ENCODE measurements at regions of chr9 and their contacts with region 1.

Region 1: DNA sequence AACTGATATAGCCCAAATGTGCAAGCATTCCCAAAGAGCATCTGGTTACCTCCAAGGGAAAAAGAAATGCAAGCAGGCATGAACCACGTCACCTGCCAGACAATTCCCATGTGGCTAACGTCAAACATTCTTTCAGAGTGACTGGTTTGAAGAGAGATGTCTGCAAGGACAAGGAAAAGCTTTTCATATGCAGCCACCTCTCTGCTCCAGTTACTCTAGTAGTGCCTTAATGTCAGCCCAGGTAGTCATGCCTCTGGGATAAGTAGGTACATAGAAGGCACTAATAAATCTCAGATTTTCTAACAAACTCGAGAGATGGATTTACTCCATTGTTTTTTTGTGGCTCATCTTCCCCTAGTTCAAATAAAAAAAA is 96.8 kb upstream of the IFNK start:
- DNase-seq: no peak
- H3K4me3 ChIP-seq: no peak overlapping the region
- H3K27ac ChIP-seq: peak overlapping the region; percentile 84 to 100 (median 95)
- H3K27me3 ChIP-seq: no peaks in the 10 kb centered on the region
- CTCF ChIP-seq: no peak

Region 2: DNA sequence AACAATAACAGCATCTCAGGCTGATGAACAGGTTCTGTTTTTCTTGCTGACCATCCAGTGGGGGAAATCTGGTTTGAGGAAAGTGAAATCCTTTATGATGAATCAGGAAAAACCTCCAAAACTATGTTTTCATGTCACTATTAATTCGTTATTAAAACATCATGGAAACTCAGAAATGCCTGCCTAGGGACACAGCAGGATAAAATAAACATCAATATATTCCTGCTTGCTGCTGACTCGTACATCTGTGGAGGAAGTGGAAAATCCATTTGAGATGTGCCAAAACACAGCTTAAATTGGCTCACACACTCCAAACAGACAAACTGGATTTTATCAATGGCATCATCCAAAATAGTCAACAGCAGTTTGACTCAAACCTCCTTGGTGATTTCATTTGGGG is 265.2 kb before region 1 on chr9:
- intact Hi-C with region 1: no loop called
- DNase-seq: no peak
- H3K4me3 ChIP-seq: no peak overlapping the region
- H3K27ac ChIP-seq: no peak overlapping the region
- H3K27me3 ChIP-seq: no peaks in the 10 kb centered on the region
- CTCF ChIP-seq: no peak

Region 3: DNA sequence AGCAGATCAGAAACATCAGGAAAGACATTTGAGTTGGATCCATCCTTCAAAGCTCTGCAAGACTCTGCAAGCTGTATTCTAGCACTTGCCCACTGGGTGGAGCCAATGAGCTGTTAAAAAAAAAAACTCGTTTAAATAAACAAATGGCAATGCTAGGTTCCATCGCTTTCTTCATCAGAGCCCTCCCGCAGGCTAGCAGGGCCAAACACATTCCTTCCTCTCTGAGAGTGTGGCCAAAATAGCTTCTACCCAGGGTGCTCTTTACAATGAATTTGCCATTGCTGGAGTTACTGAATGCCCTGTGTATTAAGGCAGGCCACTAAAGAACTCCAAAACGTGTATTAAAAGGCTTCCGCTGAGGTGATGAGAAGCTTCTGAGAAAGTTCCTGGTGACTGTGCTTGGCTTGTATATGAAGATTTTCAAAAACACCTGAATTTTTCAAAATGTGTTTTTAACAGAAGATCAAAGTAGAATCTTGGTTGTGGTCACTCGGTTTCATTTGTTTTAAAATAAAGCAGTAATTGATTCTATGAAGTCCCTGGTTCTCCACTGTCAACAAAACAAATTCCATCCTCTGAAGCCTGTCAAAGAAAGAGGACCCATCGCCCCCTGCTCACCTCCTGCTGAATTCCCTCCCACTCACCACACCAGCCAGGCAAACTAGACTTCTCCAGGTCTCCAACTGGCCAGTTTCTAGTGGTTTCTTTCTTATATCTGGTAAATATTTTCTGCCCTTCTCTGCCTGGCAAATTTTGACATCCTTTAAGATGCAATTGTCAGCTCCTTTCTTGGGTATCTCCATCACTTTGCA is 93.8 kb before region 1 on chr9:
- intact Hi-C with region 1: loop called in 1 of 2 experiments (anchors 5 kb)
- DNase-seq: peak in 6 of 10 donors; percentile 38 to 68 (median 62)
- H3K4me3 ChIP-seq: peak overlapping the region in 8 of 59 donors; percentile 3 to 41 (median 27)
- H3K27ac ChIP-seq: peak overlapping the region in 58 of 59 donors; percentile 22 to 95 (median 64)
- H3K27me3 ChIP-seq: no peaks in the 10 kb centered on the region
- CTCF ChIP-seq: peak; percentile 69 to 99 (median 96)

Region 4: DNA sequence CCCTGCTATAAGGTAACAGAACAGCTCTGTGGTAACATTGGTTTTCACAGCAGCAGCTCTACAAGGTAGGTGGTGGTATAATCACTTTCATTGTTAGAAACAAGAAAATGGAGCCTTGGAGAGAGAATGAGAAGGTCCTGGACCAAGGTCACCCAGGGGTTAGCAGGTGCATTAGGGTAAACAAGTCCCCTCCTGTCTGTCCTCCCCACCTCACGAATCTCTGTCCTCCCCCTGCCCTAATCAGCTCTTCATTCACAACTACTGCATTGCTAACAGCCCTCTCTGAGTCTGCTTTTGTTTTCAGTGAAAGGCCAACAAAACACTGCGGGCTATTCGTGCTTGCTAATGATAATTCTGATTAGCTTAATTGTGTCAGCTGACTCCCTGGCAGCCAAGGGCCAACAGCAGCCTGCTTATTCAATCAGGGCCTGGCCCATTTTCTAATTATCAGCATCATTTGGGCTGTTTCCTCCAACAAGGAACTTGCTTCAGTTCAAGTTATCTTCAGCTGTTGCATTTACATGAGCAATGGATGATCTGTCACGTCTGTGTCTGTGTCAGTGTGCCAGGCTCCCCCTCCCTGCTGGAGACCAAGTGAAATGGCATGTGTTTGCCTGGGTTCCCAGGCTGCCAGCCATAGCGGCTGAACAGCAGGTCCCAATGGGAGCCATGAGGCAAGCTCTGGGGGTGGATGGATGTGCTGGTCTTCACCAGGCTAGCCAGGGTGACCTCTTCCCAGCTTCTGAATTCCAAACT is 73.6 kb before region 1 on chr9:
- intact Hi-C with region 1: loop called in 1 of 2 experiments (anchors 2 kb)
- DNase-seq: peak; percentile 33 to 96 (median 88)
- H3K4me3 ChIP-seq: peak overlapping the region in 8 of 59 donors; percentile 2 to 27 (median 8)
- H3K27ac ChIP-seq: peak overlapping the region; percentile 37 to 98 (median 91)
- H3K27me3 ChIP-seq: no peaks in the 10 kb centered on the region
- CTCF ChIP-seq: peak in 40 of 56 donors; percentile 6 to 55 (median 32)

Region 5: DNA sequence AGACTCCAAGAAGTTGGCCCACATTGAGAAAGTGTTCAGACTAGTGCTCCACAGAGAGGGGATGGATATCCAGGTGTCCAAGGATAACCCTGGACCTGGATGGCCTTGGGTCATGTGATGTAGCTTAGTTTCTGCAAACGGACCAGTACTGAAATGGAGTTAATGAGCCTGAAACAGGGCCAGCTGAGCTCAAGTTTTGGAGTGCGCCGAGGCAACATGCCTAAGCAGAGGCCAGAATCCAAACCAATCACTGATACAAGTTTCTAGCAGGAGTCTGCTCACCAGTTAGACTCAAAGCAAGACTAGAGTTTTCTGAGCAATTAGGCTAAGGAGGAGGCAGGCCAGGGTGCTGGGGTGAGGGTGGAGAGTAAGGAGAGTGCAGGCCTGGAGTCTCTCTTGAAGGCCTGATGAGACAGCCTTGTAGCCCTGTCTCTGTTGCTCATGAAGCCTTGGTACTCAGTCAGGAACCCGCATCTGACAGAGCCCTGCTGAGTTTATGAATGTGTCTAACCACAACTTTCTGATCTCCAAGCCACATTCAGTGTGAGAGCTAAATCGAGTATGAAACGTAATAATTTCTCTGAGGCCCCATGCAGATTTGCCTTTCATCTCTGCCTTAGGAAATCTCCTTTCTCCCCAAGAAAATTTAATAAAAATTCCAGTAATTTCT is 61.4 kb before region 1 on chr9:
- intact Hi-C with region 1: loop called (anchors 5 to 10 kb)
- DNase-seq: no peak
- H3K4me3 ChIP-seq: no peak overlapping the region
- H3K27ac ChIP-seq: peak overlapping the region in 56 of 59 donors; percentile 35 to 94 (median 88)
- H3K27me3 ChIP-seq: no peaks in the 10 kb centered on the region
- CTCF ChIP-seq: no peak

Region 6: DNA sequence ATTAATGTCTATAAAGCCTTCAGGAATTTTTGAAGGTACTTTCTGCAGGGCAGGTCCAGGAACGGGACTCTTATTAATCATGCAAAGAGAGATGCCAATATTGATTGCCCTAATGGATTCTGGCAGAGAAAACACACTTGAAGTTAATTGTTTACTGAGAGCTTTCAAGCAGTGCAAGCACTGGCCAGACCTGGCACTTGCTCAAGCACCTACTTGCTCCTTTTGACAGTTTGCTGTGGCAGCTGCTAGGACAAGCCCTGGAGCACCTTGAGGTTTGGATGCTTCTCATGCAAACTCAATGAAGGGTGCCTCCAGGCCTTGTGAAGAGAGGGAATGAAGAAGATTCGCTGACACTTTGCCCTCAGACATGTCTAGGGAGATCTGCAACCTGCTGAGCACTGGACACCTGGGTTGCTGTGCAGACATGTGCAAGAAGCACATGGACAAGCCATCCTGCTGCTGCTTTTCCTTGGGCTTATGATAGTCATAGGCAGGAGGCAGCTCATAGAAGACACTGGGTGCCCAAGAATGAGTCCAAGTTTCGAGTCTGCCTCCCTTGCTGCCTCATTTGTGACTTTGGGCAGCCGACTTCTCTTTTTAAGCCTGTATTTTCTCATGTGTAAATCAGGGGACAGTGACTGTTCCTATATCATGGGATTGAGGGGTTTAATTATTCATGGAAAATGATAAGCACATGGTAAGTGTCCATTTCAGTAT is 41.5 kb before region 1 on chr9:
- intact Hi-C with region 1: no loop called
- DNase-seq: no peak
- H3K4me3 ChIP-seq: no peak overlapping the region
- H3K27ac ChIP-seq: peak overlapping the region in 44 of 59 donors; percentile 0 to 82 (median 36)
- H3K27me3 ChIP-seq: no peaks in the 10 kb centered on the region
- CTCF ChIP-seq: no peak

Region 7: GRCh38 chr9:27473111-27473529 is 45.9 kb after region 1 on chr9:
- intact Hi-C with region 1: loop called (anchors 5 to 10 kb)
- DNase-seq: peak in 7 of 10 donors; percentile 24 to 56 (median 47)
- H3K4me3 ChIP-seq: peak overlapping the region in 3 of 59 donors; percentile 3 to 11 (median 10)
- H3K27ac ChIP-seq: peak overlapping the region in 49 of 59 donors; percentile 4 to 93 (median 64)
- H3K27me3 ChIP-seq: no peaks in the 10 kb centered on the region
- CTCF ChIP-seq: no peak

Region 8: GRCh38 chr9:27529316-27530278 is 102.3 kb after region 1 on chr9 and contains the start of gene MOB3B:
- intact Hi-C with region 1: loop called (anchors 5 to 10 kb)
- DNase-seq: peak; percentile 80 to 92 (median 88)
- H3K4me3 ChIP-seq: peak within 1 kb of the TSS; percentile 54 to 97 (median 86)
- H3K27ac ChIP-seq: peak within 1 kb of the TSS; percentile 75 to 97 (median 94)
- H3K27me3 ChIP-seq: no peaks in the 10 kb centered on the region
- CTCF ChIP-seq: peak; percentile 78 to 99 (median 94)
- total RNA-seq, gene MOB3B: 9.4 to 62.2 (median 21.0) TPM

Measured in dorsolateral prefrontal cortex (tissue), 120 donors.